ENCODE measurements at regions of chr3 and their contacts with region 1.

Region 1: DNA sequence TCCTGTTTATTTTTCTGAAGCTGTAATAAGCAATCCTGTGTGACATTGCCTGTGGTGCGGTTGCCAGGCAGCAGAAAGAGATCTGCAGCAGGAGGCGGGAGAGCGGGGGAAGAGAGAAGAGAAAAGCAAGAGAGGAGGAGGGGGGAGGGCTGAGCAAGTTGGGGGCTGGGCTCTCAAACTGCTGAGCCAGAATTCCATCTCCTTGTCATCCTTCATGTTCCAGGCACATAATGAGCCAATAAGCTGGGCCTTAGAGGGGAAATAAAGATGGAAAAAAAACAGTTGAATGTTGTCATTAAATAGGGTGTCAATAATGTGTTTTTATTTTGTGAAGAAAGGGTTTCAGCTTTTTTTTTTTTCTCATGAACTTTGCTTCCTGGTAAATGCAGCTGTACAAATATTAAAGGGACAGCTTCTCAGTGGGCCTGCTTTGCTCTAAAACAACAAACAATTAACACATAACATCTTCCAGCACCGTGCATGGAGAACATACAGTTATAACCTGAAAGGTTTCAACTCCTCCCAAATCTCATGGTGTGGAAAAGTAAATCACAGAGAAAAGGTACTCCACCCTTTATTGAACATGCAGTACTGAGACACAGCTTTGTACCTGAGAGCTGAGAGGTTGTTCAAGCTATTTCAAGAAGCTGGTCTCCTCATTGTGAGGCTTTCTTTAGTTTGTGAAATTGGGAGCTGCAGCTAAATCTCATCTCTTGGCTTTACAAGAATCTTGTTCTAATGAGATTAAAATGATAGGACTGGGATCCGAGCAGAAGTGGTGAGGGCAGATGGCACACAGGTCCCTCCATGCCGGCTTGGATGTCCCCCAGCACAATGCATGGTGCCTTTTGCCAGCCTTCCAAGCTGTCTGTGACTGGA is 451.1 kb upstream of the KCNMB2 start:
- DNase-seq: peak in 8 of 9 donors; percentile 15 to 84 (median 72)
- ATAC-seq: peak; percentile 95
- H3K4me3 ChIP-seq: no peak overlapping the region
- H3K4me3 Mint-ChIP-seq: peak overlapping the region; percentile 65 to 85 (median 76)
- H3K27ac ChIP-seq: peak overlapping the region; percentile 39
- H3K27ac Mint-ChIP-seq: peak overlapping the region; percentile 26 to 95 (median 85)
- H3K4me1 ChIP-seq: peaks cover 0 to 32% of the 10 kb centered on the region in 2 donors
- H3K4me1 Mint-ChIP-seq: peaks cover 16 to 68% (median 54%) of the 10 kb centered on the region in 7 donors
- H3K27me3 ChIP-seq: no peaks in the 10 kb centered on the region
- H3K27me3 Mint-ChIP-seq: no peaks in the 10 kb centered on the region

Region 2: DNA sequence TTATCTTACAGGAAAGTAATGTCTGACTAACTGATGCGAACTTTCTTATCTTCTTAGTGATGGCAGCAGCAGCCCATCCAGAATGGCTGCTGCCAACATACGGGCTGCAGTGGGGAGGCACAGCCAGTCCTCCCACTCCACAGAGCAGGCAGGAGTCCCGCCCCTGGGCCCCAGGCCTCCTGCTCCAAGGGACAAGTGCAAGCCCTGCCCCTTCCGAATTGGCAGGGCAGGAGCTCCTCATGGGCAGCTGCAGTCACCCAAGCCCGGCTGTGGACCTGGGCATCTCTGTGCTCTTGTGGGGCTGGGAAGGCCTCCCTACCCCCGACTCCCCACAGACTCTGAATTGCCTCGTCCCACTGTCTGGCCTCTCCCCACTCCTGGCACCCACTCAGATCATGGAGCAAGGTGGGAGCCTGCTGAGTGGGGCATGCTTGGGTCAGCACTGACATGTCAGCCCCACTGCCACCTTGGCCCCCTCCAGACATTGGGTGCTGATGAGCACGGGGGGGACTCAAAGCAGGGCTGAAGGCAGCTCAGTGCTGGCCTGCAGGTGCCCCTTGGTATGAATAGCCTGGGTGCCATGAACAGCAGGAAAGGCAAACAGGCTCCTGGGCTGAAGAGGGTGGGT is 167.8 kb before region 1 on chr3:
- CTCF ChIA-PET with region 1: no interaction called
- POLR2A ChIA-PET with region 1: no interaction called
- intact Hi-C with region 1: no loop called
- DNase-seq: no peak
- ATAC-seq: no peak
- H3K4me3 ChIP-seq: no peak overlapping the region
- H3K4me3 Mint-ChIP-seq: no peak overlapping the region
- H3K27ac ChIP-seq: no peak overlapping the region
- H3K27ac Mint-ChIP-seq: peak overlapping the region in 1 of 9 donors; percentile 38
- H3K4me1 ChIP-seq: no peaks in the 10 kb centered on the region
- H3K4me1 Mint-ChIP-seq: peaks cover 0 to 5% (median 0%) of the 10 kb centered on the region in 7 donors
- H3K27me3 ChIP-seq: no peaks in the 10 kb centered on the region
- H3K27me3 Mint-ChIP-seq: no peaks in the 10 kb centered on the region

Region 3: GRCh38 chr3:177944228-177944661 is 140.9 kb before region 1 on chr3:
- CTCF ChIA-PET with region 1: no interaction called
- POLR2A ChIA-PET with region 1: no interaction called
- intact Hi-C with region 1: loop called in 1 of 2 experiments (anchors 5 kb)
- DNase-seq: peak in 7 of 9 donors; percentile 43 to 76 (median 69)
- ATAC-seq: peak; percentile 81
- H3K4me3 ChIP-seq: no peak overlapping the region
- H3K4me3 Mint-ChIP-seq: peak overlapping the region; percentile 3 to 83 (median 58)
- H3K27ac ChIP-seq: peak overlapping the region; percentile 55
- H3K27ac Mint-ChIP-seq: peak overlapping the region; percentile 4 to 92 (median 86)
- H3K4me1 ChIP-seq: peaks cover 19 to 29% of the 10 kb centered on the region in 2 donors
- H3K4me1 Mint-ChIP-seq: peaks cover 20 to 47% (median 38%) of the 10 kb centered on the region in 7 donors
- H3K27me3 ChIP-seq: no peaks in the 10 kb centered on the region
- H3K27me3 Mint-ChIP-seq: no peaks in the 10 kb centered on the region

Region 4: DNA sequence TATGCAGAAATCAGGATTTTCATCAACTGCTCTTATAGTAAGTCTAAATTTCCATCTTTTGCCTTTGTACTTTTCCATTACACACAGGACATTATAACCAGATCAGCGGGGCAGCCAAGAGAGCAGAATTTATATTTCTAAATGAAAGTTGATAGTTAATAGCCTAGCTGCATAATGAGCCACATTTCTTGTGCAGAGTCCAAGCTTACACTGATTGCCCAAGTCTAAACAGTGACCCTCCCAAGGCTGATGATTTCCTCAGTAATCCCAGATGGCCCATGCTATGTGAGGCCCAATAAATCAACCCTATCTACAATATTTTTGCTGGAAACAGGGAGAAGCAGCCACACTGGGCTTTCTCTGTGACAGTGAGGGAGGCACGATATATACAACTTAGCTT is 24.8 kb before region 1 on chr3:
- CTCF ChIA-PET with region 1: interaction called, 3 read pairs
- POLR2A ChIA-PET with region 1: no interaction called
- intact Hi-C with region 1: loop called in 1 of 2 experiments (anchors 2 kb)
- DNase-seq: no peak
- ATAC-seq: no peak
- H3K4me3 ChIP-seq: no peak overlapping the region
- H3K4me3 Mint-ChIP-seq: no peak overlapping the region
- H3K27ac ChIP-seq: no peak overlapping the region
- H3K27ac Mint-ChIP-seq: no peak overlapping the region
- H3K4me1 ChIP-seq: no peaks in the 10 kb centered on the region
- H3K4me1 Mint-ChIP-seq: peaks cover 0 to 3% (median 0%) of the 10 kb centered on the region in 7 donors
- H3K27me3 ChIP-seq: no peaks in the 10 kb centered on the region
- H3K27me3 Mint-ChIP-seq: no peaks in the 10 kb centered on the region

Region 5: GRCh38 chr3:178072391-178073305 is 12.5 kb before region 1 on chr3:
- CTCF ChIA-PET with region 1: no interaction called
- POLR2A ChIA-PET with region 1: no interaction called
- intact Hi-C with region 1: no loop called
- DNase-seq: no peak
- ATAC-seq: no peak
- H3K4me3 ChIP-seq: no peak overlapping the region
- H3K4me3 Mint-ChIP-seq: no peak overlapping the region
- H3K27ac ChIP-seq: no peak overlapping the region
- H3K27ac Mint-ChIP-seq: no peak overlapping the region
- H3K4me1 ChIP-seq: no peaks in the 10 kb centered on the region
- H3K4me1 Mint-ChIP-seq: peaks cover 4 to 6% (median 5%) of the 10 kb centered on the region in 7 donors
- H3K27me3 ChIP-seq: no peaks in the 10 kb centered on the region
- H3K27me3 Mint-ChIP-seq: peaks cover 0 to 2% (median 0%) of the 10 kb centered on the region in 5 donors

Region 6: GRCh38 chr3:178097576-178097975 is 12.4 kb after region 1 on chr3:
- CTCF ChIA-PET with region 1: interaction called, 3 read pairs
- POLR2A ChIA-PET with region 1: no interaction called
- intact Hi-C with region 1: loop called in 1 of 2 experiments (anchors 1 kb)
- DNase-seq: no peak
- ATAC-seq: no peak
- H3K4me3 ChIP-seq: no peak overlapping the region
- H3K4me3 Mint-ChIP-seq: no peak overlapping the region
- H3K27ac ChIP-seq: no peak overlapping the region
- H3K27ac Mint-ChIP-seq: no peak overlapping the region
- H3K4me1 ChIP-seq: no peaks in the 10 kb centered on the region
- H3K4me1 Mint-ChIP-seq: peaks cover 0 to 11% (median 0%) of the 10 kb centered on the region in 7 donors
- H3K27me3 ChIP-seq: no peaks in the 10 kb centered on the region
- H3K27me3 Mint-ChIP-seq: no peaks in the 10 kb centered on the region

Measured in naive thymus-derived CD4-positive, alpha-beta T cell (primary cell).